GM12878 (cell line): ENCODE measurements at regions of chr21 and their contacts with region 1.

Region 1: GRCh38 chr21:44454747-44455523 is at the start of gene LRRC3:
- DNase-seq: peak; percentile 1
- ATAC-seq: no peak
- H3K4me3 ChIP-seq: peak within 1 kb of the TSS; percentile 68; the same call in 1 of the 2 replicates
- H3K27ac ChIP-seq: no peak within 1 kb of the TSS
- H3K4me1 ChIP-seq: no peaks in the 10 kb centered on the region
- H3K27me3 ChIP-seq: no peaks in the 10 kb centered on the region
- CTCF ChIP-seq: no peak
- EP300 ChIP-seq: no peak
- POLR2A ChIP-seq: no peak
- RAD21 ChIP-seq: no peak
- polyA plus RNA-seq, gene LRRC3: 0.02 to 0.03 TPM

Region 2: GRCh38 chr21:44375281-44375651 is 79.7 kb before region 1 on chr21:
- CTCF ChIA-PET with region 1: no interaction called
- POLR2A ChIA-PET with region 1: no interaction called
- RAD21 ChIA-PET with region 1: no interaction called
- SMC1A ChIA-PET with region 1: no interaction called
- in situ Hi-C with region 1: loop called (anchors 5 kb)
- intact Hi-C with region 1: no loop called
- DNase-seq: no peak
- ATAC-seq: no peak
- H3K4me3 ChIP-seq: no peak overlapping the region
- H3K27ac ChIP-seq: no peak overlapping the region
- H3K4me1 ChIP-seq: peaks cover 3% of the 10 kb centered on the region; the same call in 1 of the 2 replicates
- H3K27me3 ChIP-seq: no peaks in the 10 kb centered on the region
- CTCF ChIP-seq: no peak
- EP300 ChIP-seq: no peak
- POLR2A ChIP-seq: no peak
- RAD21 ChIP-seq: no peak